Activated CD8-positive, alpha-beta T cell treated with anti-CD3 and anti-CD28 coated beads, Interleukin-2, amount 10 ng/mL, durations not matched to agents 7 days and 5 days (primary cell): ENCODE measurements at regions of chr1 and their contacts with region 1.

Region 1: GRCh38 chr1:179882243-179883039 is at the start of gene TOR1AIP1:
- DNase-seq: peak; percentile 98
- ATAC-seq: peak; percentile 83
- H3K4me3 Mint-ChIP-seq: peak within 1 kb of the TSS; percentile 92
- H3K27ac Mint-ChIP-seq: peak within 1 kb of the TSS; percentile 99
- H3K4me1 Mint-ChIP-seq: peaks cover 50% of the 10 kb centered on the region
- H3K27me3 Mint-ChIP-seq: no peaks in the 10 kb centered on the region
- total RNA-seq, gene TOR1AIP1: 67.7 to 71.0 TPM

Region 2: DNA sequence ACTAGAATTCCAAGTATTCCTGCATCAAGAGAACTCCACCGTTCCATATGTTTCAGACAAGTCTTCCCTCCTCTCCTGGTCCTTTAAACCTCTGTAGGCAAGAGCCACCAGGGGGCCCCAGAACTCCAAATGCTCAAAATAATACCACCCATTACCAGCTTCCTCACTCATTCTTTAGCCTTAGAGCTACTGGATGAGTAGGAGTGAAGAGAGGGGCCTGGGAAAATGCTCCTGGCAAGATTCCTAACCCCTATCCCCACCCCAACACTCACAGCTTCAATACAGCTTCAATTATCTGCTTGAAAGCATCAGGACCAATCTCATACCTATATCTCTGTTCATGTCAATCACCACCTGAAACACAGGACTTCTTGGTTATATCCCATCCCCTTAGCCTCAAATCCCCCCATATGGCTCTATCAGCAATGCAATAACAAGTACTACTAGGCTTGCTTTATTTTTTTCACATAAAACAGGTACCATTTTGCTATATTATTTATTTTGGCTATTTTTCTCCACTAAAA is 14.6 kb before region 1 on chr1:
- CTCF ChIA-PET with region 1: interaction called, 28 read pairs
- POLR2A ChIA-PET with region 1: interaction called, 7 read pairs
- DNase-seq: peak; percentile 65
- ATAC-seq: peak; percentile 87
- H3K4me3 Mint-ChIP-seq: no peak overlapping the region
- H3K27ac Mint-ChIP-seq: peak overlapping the region; percentile 16
- H3K4me1 Mint-ChIP-seq: peaks cover 8% of the 10 kb centered on the region
- H3K27me3 Mint-ChIP-seq: no peaks in the 10 kb centered on the region

Region 3: DNA sequence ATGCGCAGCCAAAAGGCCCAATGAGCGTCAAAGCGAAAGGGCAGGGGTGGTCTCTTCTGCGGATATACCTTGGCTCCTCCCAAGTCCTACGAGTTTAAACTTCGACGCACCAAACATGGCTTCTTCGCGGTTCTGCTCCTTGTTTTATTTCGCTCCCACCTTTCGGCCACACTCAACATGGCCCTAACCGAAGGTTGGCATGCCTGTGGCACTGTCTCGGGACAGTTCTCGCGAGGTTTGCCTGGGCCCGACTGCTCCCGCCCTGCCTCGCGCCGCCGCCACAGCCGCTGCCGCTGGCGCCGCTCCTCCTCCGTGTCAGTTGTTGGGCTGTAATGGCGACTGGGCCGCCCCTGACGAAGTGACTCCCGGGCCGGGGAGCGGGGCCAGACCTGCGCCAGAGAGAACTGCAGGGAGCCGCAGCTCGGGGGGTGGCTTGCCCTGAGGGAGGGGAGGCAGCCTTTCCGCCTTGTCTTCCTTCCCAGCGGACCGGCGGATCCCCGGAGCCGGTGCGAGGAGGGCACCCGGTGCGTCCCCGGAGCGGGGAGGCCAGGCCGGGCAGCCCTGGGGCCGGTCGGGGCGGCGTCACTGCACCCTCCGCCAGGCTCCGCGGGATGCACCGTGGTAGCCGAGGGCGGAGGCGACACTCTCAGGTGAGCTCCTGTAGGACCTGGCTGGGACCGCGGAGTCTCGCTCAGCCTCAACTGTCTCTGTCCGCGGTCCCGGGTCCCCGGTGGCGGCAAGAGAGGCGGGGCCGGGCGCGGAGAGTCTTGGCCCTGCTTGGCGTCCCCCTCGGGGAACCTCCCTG is 72.3 kb after region 1 on chr1 and contains the start of gene CEP350:
- CTCF ChIA-PET with region 1: interaction called, 3 read pairs
- POLR2A ChIA-PET with region 1: interaction called, 61 read pairs
- DNase-seq: peak; percentile 99
- ATAC-seq: peak; percentile 94
- H3K4me3 Mint-ChIP-seq: peak within 1 kb of the TSS; percentile 79
- H3K27ac Mint-ChIP-seq: peak within 1 kb of the TSS; percentile 98
- H3K4me1 Mint-ChIP-seq: peaks cover 48% of the 10 kb centered on the region
- H3K27me3 Mint-ChIP-seq: no peaks in the 10 kb centered on the region
- total RNA-seq, gene CEP350: 59.3 to 65.1 TPM

Region 4: GRCh38 chr1:180154325-180155181 is 272.1 kb after region 1 on chr1 and contains the start of gene QSOX1:
- CTCF ChIA-PET with region 1: no interaction called
- POLR2A ChIA-PET with region 1: interaction called, 13 read pairs
- DNase-seq: peak; percentile 90
- ATAC-seq: peak; percentile 94
- H3K4me3 Mint-ChIP-seq: peak within 1 kb of the TSS; percentile 92
- H3K27ac Mint-ChIP-seq: peak within 1 kb of the TSS; percentile 92
- H3K4me1 Mint-ChIP-seq: peaks cover 38% of the 10 kb centered on the region
- H3K27me3 Mint-ChIP-seq: no peaks in the 10 kb centered on the region
- total RNA-seq, gene QSOX1: 23.9 to 25.2 TPM